Activated naive CD4-positive, alpha-beta T cell treated with anti-CD3 and anti-CD28 coated beads for 36 hours (primary cell): ENCODE measurements at regions of chr5 and their contacts with region 1.

Region 1: GRCh38 chr5:76269932-76270610 is 133.0 kb upstream of the IQGAP2 start:
- DNase-seq: peak; percentile 65
- H3K4me3 Mint-ChIP-seq: peak overlapping the region; percentile 10
- H3K27ac Mint-ChIP-seq: peak overlapping the region; percentile 83
- H3K4me1 Mint-ChIP-seq: peaks cover 21% of the 10 kb centered on the region
- H3K27me3 Mint-ChIP-seq: no peaks in the 10 kb centered on the region

Region 2: DNA sequence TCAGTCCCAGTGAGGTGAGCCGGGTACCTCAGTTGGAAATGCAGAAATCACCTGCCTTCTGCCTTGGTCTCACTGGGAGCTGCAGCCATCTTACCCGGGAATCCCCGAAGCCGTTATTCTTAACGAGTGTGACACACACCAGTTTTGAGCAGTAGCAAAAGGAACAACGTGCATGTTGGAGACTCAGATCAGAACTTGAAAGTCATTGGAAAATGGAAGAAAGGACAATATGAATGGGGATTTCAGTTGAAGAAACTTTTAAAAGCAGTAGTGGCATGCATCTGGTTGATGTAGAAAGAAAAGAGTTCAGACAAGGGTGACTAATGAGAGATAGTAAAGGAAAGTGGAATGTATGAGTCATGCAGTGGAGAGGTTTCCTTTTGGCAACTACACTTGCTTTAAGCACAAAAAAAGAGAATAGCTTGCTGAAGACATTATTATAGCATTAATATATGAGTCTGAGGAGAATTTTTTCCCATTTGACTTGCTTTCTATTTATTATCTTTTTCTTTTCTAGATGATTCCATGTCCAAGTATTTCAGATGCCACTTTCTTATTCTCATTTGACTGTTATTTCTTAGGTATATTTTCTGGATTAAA is 703.3 kb before region 1 on chr5:
- CTCF ChIA-PET with region 1: no interaction called
- intact Hi-C with region 1: loop called (anchors 1 kb)
- DNase-seq: peak; percentile 84
- H3K4me3 Mint-ChIP-seq: peak overlapping the region; percentile 48
- H3K27ac Mint-ChIP-seq: peak overlapping the region; percentile 95
- H3K4me1 Mint-ChIP-seq: peaks cover 55% of the 10 kb centered on the region
- H3K27me3 Mint-ChIP-seq: no peaks in the 10 kb centered on the region

Region 3: GRCh38 chr5:76299592-76299991 is 29.5 kb after region 1 on chr5:
- CTCF ChIA-PET with region 1: no interaction called
- intact Hi-C with region 1: no loop called
- DNase-seq: no peak
- H3K4me3 Mint-ChIP-seq: no peak overlapping the region
- H3K27ac Mint-ChIP-seq: no peak overlapping the region
- H3K4me1 Mint-ChIP-seq: peaks cover 18% of the 10 kb centered on the region
- H3K27me3 Mint-ChIP-seq: no peaks in the 10 kb centered on the region

Region 4: DNA sequence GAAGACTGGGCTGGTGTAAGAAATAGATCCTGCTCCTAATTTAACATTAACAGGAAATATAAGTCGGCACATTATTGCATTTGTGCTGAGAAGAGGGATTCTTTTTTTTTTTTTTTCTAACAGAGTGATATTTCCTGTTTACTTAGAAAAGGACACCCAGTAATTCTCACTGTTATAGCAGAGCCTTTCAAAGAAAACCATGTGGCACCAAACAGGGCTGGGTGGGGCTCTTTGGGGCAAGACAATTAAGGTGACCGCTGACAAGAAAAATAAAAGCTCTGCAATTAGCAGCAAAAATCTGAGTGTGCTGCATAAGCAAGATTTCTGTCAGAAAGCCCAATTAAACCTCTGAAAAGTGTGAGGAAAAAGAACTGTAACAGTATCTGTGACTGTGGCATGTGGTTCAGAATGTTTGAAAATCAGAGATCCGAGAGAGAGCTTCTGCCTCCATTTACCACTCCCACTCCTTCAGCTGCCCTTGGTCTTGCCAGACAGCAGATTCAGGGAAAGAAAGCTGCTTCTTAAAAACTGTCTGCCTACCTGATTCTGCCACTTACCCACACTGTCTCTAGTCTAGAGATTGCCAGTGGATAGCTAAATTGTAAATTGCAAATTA is 55.9 kb after region 1 on chr5:
- CTCF ChIA-PET with region 1: no interaction called
- intact Hi-C with region 1: loop called (anchors 2 kb)
- DNase-seq: peak; percentile 34
- H3K4me3 Mint-ChIP-seq: peak overlapping the region; percentile 45
- H3K27ac Mint-ChIP-seq: peak overlapping the region; percentile 26
- H3K4me1 Mint-ChIP-seq: peaks cover 43% of the 10 kb centered on the region
- H3K27me3 Mint-ChIP-seq: no peaks in the 10 kb centered on the region

Region 5: DNA sequence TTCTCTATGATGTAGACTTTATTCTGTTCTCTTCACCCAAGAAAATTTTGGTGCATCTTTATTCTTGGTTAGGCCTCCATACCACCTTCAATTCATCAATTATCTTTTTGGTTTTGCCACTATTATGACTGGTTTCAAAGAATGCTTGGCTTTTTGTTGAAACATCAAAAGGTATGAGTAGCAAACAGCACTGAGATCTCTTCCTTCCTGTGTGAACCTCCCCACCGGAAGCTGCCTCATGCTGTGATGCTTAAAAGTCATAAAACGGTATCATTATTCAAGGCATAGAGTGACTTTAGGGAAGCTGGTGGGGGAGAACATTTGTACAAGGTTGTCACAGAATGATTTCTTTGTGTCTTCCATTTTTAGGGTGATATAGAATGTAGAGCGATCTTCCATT is 203.6 kb after region 1 on chr5:
- CTCF ChIA-PET with region 1: no interaction called
- intact Hi-C with region 1: loop called (anchors 1 kb)
- DNase-seq: peak; percentile 90
- H3K4me3 Mint-ChIP-seq: peak overlapping the region; percentile 38
- H3K27ac Mint-ChIP-seq: peak overlapping the region; percentile 92
- H3K4me1 Mint-ChIP-seq: peaks cover 76% of the 10 kb centered on the region
- H3K27me3 Mint-ChIP-seq: no peaks in the 10 kb centered on the region

Region 6: GRCh38 chr5:76582230-76583162 is 312.4 kb after region 1 on chr5:
- CTCF ChIA-PET with region 1: interaction called, 4 read pairs
- intact Hi-C with region 1: loop called (anchors 1 kb)
- DNase-seq: peak; percentile 65
- H3K4me3 Mint-ChIP-seq: no peak overlapping the region
- H3K27ac Mint-ChIP-seq: peak overlapping the region; percentile 36
- H3K4me1 Mint-ChIP-seq: peaks cover 27% of the 10 kb centered on the region
- H3K27me3 Mint-ChIP-seq: no peaks in the 10 kb centered on the region

Region 7: DNA sequence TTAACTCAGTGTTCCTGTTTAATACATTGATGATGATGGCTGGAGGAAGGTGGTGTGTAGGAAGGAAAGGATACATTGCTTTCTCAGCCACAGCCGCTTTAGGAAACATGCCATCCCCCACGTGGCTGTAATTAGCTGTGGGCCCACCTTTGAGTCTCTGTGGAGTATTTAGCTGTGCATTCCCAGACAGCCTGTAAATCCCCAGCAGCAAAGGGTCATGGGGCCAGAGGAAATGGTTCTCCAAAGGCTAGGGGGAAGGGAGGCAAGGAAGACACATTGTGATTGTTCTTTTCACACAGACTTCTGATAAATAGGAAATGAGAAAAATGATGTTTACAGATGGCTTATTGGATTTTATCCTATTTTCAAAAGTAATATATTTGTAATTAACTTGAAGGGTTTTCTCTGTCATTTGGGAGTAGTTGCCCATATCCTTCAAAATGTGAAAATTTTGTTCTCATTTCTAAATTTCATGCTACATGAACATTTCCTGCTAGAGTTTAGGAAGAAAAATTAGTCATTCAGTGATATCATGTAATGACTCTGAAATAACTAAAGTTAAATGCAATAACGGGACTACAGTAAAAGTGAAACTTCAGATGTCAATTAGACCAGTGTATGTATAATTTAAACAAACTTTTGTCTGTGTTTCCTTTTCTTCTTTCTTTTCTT is 421.5 kb after region 1 on chr5:
- CTCF ChIA-PET with region 1: no interaction called
- intact Hi-C with region 1: loop called (anchors 1 kb)
- DNase-seq: no peak
- H3K4me3 Mint-ChIP-seq: no peak overlapping the region
- H3K27ac Mint-ChIP-seq: peak overlapping the region; percentile 36
- H3K4me1 Mint-ChIP-seq: peaks cover 15% of the 10 kb centered on the region
- H3K27me3 Mint-ChIP-seq: no peaks in the 10 kb centered on the region